WTC11 (cell line): ENCODE measurements at regions of chr2 and their contacts with region 1.

Region 1: DNA sequence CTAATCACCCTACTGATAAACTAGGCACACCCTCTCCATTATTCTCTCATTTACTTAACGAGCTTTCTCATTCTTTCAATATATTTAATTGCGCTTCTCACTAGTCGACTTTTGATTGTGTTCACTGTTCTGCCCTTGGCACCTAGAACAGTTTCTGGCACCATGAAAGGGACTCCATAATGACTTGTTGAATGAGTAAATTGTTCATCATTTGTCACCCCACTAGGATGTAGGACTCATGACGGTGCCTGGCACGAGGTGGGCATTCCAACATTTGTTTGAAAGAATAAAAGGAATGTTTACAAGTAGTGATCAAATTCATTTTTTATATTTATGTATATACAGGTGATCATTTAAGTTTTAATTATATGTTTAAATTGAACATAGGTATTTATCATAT is 123.7 kb downstream of the DIS3L2 start:
- DNase-seq: no peak
- ATAC-seq: no peak
- H3K4me3 Mint-ChIP-seq: no peak overlapping the region
- H3K27ac Mint-ChIP-seq: no peak overlapping the region
- H3K4me1 Mint-ChIP-seq: peaks cover 13% of the 10 kb centered on the region
- H3K27me3 Mint-ChIP-seq: no peaks in the 10 kb centered on the region; the same call in 1 of the 2 replicates
- CTCF ChIP-seq: no peak

Region 2: DNA sequence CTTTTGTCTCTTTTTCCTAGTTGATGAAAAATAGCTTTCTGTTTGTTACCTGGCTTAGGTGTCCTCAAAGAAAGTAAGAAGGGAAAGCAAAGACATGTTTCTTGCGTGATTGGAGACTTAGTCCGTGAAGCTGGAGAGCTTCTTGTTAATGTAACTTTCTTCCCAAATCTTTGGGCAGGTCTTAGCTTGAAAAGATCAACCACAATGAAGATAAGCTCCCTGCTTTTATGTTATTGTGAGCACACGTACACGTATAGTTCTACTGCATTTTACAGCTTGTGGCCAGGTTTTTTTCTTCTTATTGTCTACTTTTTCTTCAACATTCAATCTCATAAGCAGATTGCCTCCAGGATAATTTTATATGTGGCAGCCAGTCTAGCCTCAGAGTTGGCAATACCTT is 23.9 kb before region 1 on chr2:
- CTCF ChIA-PET with region 1: no interaction called
- POLR2A ChIA-PET with region 1: interaction called, 12 read pairs
- DNase-seq: no peak
- ATAC-seq: no peak
- H3K4me3 Mint-ChIP-seq: no peak overlapping the region
- H3K27ac Mint-ChIP-seq: no peak overlapping the region
- H3K4me1 Mint-ChIP-seq: no peaks in the 10 kb centered on the region
- H3K27me3 Mint-ChIP-seq: no peaks in the 10 kb centered on the region
- CTCF ChIP-seq: no peak